Activated T-helper 1 cell treated with anti-CD3 and anti-CD28 coated beads, Interleukin-12 subunit alpha, Interleukin-12 subunit beta, Interleukin-2, Interleukin-4 antibody, amounts not matched to agents 30 ng/mL and 10 ng/mL and 1 ng/mL, durations not matched to agents 14 hours and 24 hours and 36 hours (primary cell): ENCODE measurements at regions of chr14 and their contacts with region 1.

Region 1: GRCh38 chr14:20613094-20614037 is 22.2 kb upstream of the RNASE12 start:
- DNase-seq: peak; percentile 77
- H3K4me3 Mint-ChIP-seq: no peak overlapping the region
- H3K27ac Mint-ChIP-seq: no peak overlapping the region
- H3K4me1 Mint-ChIP-seq: peaks cover 11% of the 10 kb centered on the region
- H3K27me3 Mint-ChIP-seq: peaks cover 2% of the 10 kb centered on the region

Region 2: GRCh38 chr14:20305265-20306078 is 307.9 kb before region 1 on chr14 and contains the start of gene TTC5:
- intact Hi-C with region 1: loop called (anchors 1 kb)
- DNase-seq: peak; percentile 85
- H3K4me3 Mint-ChIP-seq: peak within 1 kb of the TSS; percentile 96
- H3K27ac Mint-ChIP-seq: peak within 1 kb of the TSS; percentile 94
- H3K4me1 Mint-ChIP-seq: peaks cover 25% of the 10 kb centered on the region
- H3K27me3 Mint-ChIP-seq: no peaks in the 10 kb centered on the region
- total RNA-seq, gene TTC5: 33.0 and 33.7 TPM in 2 replicates

Region 3: DNA sequence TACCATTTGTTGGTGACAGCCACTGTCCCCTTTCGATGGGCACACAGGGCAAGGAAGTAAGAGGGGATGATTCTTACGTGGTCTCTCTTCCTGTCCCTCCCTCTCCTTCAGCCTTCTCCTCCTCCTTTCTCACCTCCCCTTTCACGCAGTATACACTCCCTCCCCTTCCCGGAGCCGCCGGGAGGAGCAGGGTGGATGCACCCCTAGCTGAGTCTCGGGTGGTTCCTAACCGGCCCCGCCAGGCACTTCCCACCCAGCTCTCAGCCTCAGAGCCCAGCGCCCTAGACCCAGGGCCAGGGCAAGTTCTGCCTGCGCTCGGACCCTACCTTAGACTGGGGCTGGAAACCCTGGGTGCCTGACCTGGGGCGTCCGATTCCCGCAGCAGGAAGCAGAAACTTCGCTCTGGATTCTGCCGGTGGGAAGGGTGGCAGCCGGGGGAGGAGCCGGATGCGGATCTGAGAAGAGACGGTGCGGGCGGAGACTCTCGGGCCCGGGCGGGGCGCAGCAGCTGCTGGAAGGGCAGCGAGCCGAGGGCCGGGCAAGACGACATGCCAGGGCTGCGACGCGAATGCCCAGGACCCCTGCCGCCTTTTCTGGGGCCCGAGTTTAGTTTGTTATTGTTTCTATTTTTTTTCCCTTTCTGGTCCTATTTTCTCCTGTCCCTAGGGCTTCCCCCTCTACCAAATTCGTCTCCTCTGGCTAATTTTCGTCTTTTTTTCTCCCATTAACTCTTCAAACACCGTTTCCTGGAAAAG is 200.1 kb before region 1 on chr14 and contains the start of gene TEP1:
- intact Hi-C with region 1: loop called (anchors 1 kb)
- DNase-seq: peak; percentile 69
- H3K4me3 Mint-ChIP-seq: peak within 1 kb of the TSS; percentile 100
- H3K27ac Mint-ChIP-seq: peak within 1 kb of the TSS; percentile 99
- H3K4me1 Mint-ChIP-seq: peaks cover 40% of the 10 kb centered on the region
- H3K27me3 Mint-ChIP-seq: no peaks in the 10 kb centered on the region
- total RNA-seq, gene TEP1: 39.3 and 41.9 TPM in 2 replicates

Region 4: DNA sequence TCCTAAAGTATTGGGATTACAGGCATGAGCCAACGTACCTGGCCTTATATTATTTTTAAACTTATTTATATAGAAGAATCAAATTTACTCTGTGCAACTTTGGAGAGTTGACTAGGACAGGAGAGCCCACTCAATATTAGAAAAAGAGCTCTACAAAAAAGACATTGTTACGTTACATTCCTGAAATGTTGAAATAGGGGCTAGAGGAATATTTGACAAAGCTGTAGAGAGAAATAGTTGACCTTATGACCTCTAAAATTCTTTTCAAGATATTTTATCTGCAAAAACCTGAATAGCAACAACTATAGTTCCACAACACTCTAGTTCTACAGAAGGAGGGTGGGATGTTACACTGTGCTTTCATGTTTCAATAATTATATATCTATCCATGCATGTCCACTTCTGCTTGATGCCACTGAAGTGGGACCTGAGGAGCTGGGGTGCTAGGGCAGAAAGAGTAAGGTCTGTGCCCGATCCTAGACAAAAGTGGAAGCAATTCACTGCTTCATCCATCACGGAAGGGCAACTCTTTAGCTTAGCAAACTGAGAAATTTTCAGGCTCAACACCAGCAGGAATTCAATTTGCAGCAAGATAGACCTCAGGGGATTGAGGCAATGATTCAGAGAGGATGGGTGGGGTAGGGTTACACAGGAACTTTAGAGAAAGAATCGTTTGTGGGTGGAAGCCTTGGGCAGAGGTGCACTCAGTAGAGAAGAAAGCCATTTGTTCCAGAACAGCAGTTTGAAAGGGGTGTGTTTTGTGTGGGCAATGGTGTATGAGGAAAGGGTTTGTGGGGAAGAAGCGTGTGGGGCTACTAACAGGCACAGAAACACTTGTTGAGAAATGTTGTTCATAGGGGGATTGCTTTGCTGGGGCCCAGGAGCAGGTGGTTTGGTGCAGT is 124.0 kb before region 1 on chr14:
- intact Hi-C with region 1: no loop called
- DNase-seq: no peak
- H3K4me3 Mint-ChIP-seq: peak overlapping the region; percentile 19
- H3K27ac Mint-ChIP-seq: peak overlapping the region; percentile 54
- H3K4me1 Mint-ChIP-seq: peaks cover 54% of the 10 kb centered on the region
- H3K27me3 Mint-ChIP-seq: no peaks in the 10 kb centered on the region

Region 5: GRCh38 chr14:20516906-20517305 is 96.5 kb before region 1 on chr14:
- intact Hi-C with region 1: no loop called
- DNase-seq: no peak
- H3K4me3 Mint-ChIP-seq: no peak overlapping the region
- H3K27ac Mint-ChIP-seq: no peak overlapping the region
- H3K4me1 Mint-ChIP-seq: no peaks in the 10 kb centered on the region
- H3K27me3 Mint-ChIP-seq: peaks cover 7% of the 10 kb centered on the region

Region 6: GRCh38 chr14:20530771-20531571 is 82.4 kb before region 1 on chr14:
- intact Hi-C with region 1: loop called (anchors 1 kb)
- DNase-seq: peak; percentile 43
- H3K4me3 Mint-ChIP-seq: no peak overlapping the region
- H3K27ac Mint-ChIP-seq: no peak overlapping the region
- H3K4me1 Mint-ChIP-seq: peaks cover 9% of the 10 kb centered on the region
- H3K27me3 Mint-ChIP-seq: peaks cover 50% of the 10 kb centered on the region

Region 7: GRCh38 chr14:20652996-20653975 is 39.9 kb after region 1 on chr14:
- intact Hi-C with region 1: loop called (anchors 1 kb)
- DNase-seq: peak; percentile 37
- H3K4me3 Mint-ChIP-seq: peak overlapping the region; percentile 63
- H3K27ac Mint-ChIP-seq: no peak overlapping the region
- H3K4me1 Mint-ChIP-seq: peaks cover 24% of the 10 kb centered on the region
- H3K27me3 Mint-ChIP-seq: peaks cover 72% of the 10 kb centered on the region

Region 8: DNA sequence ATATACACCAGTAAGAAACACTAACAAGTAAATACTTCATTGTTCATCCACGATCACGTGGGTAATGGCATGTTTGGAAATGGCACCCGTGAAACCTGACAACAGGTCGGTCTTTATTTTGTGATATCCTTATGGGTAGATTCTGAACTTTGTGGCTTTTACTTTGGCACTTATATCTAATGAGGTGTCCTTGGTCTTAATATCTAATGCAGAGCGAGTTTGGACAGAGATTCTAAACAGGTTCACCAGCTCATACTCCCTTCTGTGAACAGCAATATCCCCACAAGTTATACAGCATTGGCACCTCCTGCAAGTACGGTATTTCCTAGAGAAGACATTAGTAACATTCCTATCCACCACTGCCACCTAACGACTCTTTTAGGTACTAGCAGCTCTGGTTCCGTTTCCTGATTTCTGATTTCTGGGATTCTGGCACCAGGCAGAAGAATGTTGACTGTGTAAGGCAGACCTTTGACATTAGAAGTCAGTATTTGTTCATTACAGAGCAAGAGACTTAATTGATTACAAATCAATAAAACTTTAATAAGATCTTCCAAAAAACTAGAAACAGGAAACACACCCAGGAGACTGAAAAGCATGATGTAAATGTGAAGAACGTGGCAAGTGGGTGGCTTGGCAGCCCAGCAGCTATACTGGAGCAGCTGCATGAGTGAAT is 77.6 kb after region 1 on chr14:
- intact Hi-C with region 1: loop called (anchors 1 kb)
- DNase-seq: peak; percentile 31
- H3K4me3 Mint-ChIP-seq: no peak overlapping the region
- H3K27ac Mint-ChIP-seq: no peak overlapping the region
- H3K4me1 Mint-ChIP-seq: peaks cover 8% of the 10 kb centered on the region
- H3K27me3 Mint-ChIP-seq: no peaks in the 10 kb centered on the region

Region 9: GRCh38 chr14:20970983-20971704 is 357.8 kb after region 1 on chr14:
- intact Hi-C with region 1: loop called (anchors 5 kb)
- DNase-seq: peak; percentile 72
- H3K4me3 Mint-ChIP-seq: peak overlapping the region; percentile 93
- H3K27ac Mint-ChIP-seq: no peak overlapping the region
- H3K4me1 Mint-ChIP-seq: peaks cover 15% of the 10 kb centered on the region
- H3K27me3 Mint-ChIP-seq: peaks cover 35% of the 10 kb centered on the region